A549 (cell line): ENCODE measurements at regions of chr12 and their contacts with region 1.

Region 1: DNA sequence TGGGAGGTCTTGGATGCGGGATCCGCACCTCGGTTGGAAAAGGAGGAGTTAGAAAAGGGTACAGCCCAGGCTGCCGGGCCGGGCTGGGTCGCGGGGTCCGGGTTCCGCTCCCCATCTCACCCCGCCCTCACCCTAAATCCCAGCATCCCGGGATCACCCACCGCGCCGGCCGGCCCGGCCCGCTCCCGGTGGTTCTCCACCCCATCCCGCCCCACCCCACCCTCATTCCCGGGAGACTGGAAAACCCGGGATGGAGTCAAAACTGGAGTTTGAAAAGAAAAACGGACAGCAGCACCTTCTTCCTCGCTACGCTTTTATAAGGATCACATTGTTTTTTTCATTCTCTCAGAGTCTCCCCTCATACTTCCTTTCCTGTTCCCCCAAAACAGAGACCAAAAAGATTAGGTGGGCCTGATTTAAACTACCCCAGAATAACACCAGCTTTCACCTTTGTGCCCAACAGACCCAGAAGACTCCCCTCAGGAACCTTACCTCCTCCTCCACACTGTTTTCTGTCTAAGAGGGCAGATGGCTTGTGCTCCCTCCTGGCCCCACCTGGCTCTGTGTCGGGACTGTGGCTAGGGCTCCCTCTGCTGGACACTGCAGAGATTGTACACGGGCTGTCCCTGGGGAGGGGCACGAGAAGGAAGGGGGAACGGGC is 2.8 kb downstream of the GLI1 start:
- DNase-seq: peak; percentile 96 to 98
- ATAC-seq: peak; percentile 54 to 77
- H3K4me3 ChIP-seq: peak overlapping the region; percentile 65
- H3K27ac ChIP-seq: peak overlapping the region; percentile 92 to 99
- H3K4me1 ChIP-seq: peaks cover 20% of the 10 kb centered on the region
- CTCF ChIP-seq: peak; percentile 96
- EP300 ChIP-seq: peak in 1 of 2 experiments; percentile 21; a peak in 2 of 5 replicates
- POLR2A ChIP-seq: no peak; the same call in 1 of the 2 replicates
- RAD21 ChIP-seq: peak; percentile 84 to 91

Region 2: DNA sequence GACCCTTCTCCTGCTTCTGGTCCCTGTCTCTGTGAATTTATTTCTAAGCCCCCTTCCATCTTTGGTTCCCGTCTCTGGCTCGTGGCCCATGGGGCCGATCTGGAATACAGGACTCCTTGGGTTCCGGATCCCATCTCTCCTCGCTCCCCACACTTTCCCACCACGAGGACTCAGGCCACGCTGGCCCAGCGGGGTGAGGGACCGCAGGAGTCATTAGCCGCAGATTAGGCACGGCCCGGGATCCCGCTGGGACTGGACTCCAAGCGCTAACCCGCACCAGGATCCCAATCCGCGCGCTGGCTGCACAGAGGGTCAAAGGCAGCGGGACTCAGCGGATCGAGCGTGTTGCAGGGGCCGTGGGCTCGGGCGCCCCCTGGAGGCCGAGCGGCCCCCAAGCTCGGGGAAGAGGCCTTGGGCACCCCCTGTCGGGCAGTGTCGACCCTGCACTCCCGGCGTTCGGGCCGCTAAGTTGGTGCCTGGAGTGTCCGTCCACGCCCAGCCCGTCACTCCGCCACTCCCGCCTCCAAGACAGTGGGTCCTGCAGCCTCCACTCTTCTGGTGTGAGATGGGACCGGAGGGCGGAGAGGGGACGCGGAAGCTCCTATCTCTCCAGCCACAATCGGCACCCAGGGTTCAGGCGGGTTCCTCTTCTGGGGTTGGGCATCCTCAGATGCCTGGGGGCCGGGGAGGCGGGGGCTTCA is 223.4 kb before region 1 on chr12:
- CTCF ChIA-PET with region 1: interaction called, 23 read pairs
- POLR2A ChIA-PET with region 1: no interaction called
- DNase-seq: peak; percentile 88 to 92
- ATAC-seq: peak; percentile 49 to 73
- H3K4me3 ChIP-seq: peak overlapping the region; percentile 55
- H3K27ac ChIP-seq: peak overlapping the region; percentile 75 to 93
- H3K4me1 ChIP-seq: peaks cover 26% of the 10 kb centered on the region; the same call in 2 of the 3 replicates
- CTCF ChIP-seq: peak; percentile 100
- EP300 ChIP-seq: no peak
- POLR2A ChIP-seq: no peak
- RAD21 ChIP-seq: peak; percentile 79 to 88

Region 3: DNA sequence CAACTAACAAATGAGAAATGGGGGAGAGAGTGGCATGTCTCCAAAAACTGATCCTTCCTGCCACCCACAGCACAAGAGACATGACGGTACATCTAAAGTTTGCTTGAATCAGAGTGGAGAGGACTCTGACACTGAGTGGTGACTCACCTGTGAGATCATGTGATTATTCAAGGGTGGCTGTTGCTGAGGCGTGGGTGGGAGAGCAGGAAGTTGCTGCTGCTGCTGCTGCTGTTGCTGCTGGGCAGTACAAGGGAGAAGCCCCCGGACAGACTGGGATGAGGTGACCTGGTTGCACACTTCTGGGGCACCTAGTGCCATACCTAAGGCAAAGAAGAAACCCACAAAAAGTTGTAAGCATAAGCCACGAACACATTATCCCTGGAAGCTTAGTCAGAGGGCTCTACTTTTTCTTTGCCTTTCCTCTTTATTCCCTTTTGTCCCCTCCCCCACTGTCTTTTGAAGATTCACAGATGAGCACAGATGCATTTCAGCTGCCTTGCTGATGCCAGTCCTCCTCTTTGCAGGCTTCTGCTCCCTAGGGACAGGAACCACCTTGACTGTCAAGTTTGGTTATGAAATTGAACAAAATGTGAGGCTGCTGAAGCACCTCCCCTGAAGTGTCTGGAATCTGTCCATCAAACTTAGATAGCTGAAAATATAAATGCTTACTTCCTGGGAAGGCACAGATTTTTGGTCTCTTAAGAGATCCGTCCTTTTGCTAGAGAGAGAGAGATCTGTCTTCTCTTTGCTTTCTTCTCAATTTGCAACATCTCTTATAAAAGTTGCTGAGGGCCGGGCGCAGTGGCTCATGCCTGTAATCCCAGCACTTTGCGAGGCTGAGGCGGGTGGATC is 181.9 kb before region 1 on chr12:
- CTCF ChIA-PET with region 1: interaction called, 11 read pairs
- POLR2A ChIA-PET with region 1: no interaction called
- DNase-seq: peak; percentile 78 to 89
- ATAC-seq: peak; percentile 95 to 98
- H3K4me3 ChIP-seq: no peak overlapping the region
- H3K27ac ChIP-seq: peak overlapping the region; percentile 73 to 90
- H3K4me1 ChIP-seq: peaks cover 32% of the 10 kb centered on the region
- CTCF ChIP-seq: no peak
- EP300 ChIP-seq: peak in 1 of 2 experiments; percentile 45; a peak in 2 of 5 replicates
- POLR2A ChIP-seq: peak; percentile 34
- RAD21 ChIP-seq: no peak

Region 4: DNA sequence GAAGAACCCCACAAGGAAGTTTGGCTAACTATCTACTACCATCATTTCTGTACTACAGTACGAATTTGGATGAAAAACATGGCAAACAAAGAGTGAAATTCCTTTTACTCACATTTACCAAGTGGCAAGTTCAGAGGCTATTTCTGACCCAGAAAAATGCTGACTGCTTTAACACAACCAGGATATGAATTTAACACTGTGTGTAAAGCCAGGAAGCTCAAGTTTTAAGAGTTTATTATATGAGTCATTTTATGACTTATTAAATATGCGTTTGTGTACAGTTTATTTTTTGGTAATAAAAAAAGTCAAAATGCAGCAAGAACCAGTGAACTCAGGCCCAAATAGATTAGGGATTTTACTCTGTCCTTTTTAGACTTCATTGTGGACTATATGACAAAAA is 153.0 kb before region 1 on chr12:
- CTCF ChIA-PET with region 1: interaction called, 22 read pairs
- POLR2A ChIA-PET with region 1: no interaction called
- DNase-seq: peak in 1 of 2 experiments; percentile 43
- ATAC-seq: peak; percentile 26 to 61; a peak in 4 of 6 replicates
- H3K4me3 ChIP-seq: no peak overlapping the region
- H3K27ac ChIP-seq: peak overlapping the region; percentile 58 to 76
- H3K4me1 ChIP-seq: peaks cover 30% of the 10 kb centered on the region
- CTCF ChIP-seq: no peak
- EP300 ChIP-seq: no peak
- POLR2A ChIP-seq: no peak
- RAD21 ChIP-seq: no peak

Region 5: DNA sequence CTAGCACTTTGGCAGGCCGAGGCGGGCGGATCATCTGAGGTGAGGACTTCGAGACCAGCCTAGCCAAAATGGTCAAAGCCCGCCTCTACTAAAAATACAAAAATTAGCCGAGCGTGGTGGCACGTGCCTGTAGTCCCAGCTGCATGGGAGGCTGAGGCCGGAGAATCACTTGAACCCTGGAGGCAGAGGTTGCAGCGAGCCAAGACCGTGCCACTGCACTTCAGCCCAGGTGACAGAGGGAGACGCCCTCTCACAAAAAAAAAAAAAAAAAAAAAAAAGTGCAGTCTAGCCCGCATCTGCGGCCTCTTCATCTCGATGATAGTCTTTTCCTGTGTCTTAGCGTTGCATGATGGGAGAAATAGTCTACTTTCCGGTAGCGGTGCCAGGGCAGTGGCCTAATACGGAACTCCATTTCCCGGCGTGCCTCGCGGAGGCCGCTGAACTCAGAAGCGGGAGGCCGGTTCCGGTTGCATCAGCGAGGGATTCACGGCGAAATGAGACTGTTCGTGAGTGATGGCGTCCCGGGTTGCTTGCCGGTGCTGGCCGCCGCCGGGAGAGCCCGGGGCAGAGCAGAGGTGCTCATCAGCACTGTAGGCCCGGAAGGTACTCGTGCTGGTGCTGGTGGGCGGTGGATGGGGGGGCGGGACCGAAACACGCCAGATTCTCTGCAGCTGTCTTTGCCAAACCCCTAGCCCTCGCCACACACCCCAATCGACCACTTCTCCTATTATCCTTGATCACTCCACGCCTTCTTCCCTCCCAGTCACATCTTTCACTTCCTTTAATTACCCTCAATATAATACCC is 25.4 kb after region 1 on chr12 and contains the start of gene MARS1:
- CTCF ChIA-PET with region 1: interaction called, 240 read pairs
- POLR2A ChIA-PET with region 1: no interaction called
- DNase-seq: peak; percentile 94 to 98
- ATAC-seq: peak; percentile 98
- H3K4me3 ChIP-seq: peak within 1 kb of the TSS; percentile 79
- H3K27ac ChIP-seq: peak within 1 kb of the TSS; percentile 94 to 99
- H3K4me1 ChIP-seq: peaks cover 12% of the 10 kb centered on the region
- CTCF ChIP-seq: peak; percentile 45
- EP300 ChIP-seq: no peak
- POLR2A ChIP-seq: peak; percentile 76
- RAD21 ChIP-seq: no peak; a peak in 1 of 5 replicates
- polyA plus RNA-seq, gene MARS1: 372 and 406 TPM in 2 replicates

Region 6: DNA sequence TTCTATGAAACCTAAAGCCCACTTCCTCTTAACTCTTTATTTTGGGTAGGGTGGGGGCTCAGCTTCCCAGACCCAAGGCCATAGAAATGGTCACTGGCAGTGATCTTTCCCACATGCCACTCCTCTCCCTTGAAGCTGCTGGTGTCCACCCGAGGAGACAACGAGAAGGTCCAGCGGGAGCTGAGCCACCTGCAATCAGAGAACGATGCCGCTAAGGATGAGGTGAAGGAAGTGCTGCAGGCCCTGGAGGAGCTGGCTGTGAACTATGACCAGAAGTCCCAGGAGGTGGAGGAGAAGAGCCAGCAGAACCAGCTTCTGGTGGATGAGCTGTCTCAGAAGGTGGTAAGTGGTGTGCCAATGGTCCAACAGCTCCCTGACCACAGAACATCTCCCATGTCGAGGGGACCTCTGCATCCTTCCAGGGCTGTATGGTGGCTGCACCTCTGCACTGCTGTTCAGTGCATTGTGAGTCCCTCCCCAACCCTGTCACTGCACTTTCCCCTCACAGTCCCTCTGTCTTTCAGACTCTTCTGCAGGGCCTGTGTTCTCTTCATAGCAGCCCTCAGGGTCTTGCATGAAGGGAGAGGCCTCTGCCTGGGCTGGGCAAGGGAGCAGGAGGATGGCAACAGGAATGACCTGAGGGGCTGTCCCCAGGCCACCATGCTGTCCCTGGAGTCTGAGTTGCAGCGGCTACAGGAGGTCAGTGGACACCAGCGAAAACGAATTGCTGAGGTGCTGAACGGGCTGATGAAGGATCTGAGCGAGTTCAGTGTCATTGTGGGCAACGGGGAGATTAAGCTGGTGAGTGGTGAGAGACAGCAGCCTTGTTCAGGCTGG is 109.8 kb after region 1 on chr12:
- CTCF ChIA-PET with region 1: no interaction called
- POLR2A ChIA-PET with region 1: no interaction called
- DNase-seq: no peak
- ATAC-seq: peak; percentile 17 to 28; a peak in 2 of 6 replicates
- H3K4me3 ChIP-seq: no peak overlapping the region
- H3K27ac ChIP-seq: no peak overlapping the region
- H3K4me1 ChIP-seq: no peaks in the 10 kb centered on the region
- CTCF ChIP-seq: no peak
- EP300 ChIP-seq: no peak
- POLR2A ChIP-seq: no peak
- RAD21 ChIP-seq: no peak

Region 7: DNA sequence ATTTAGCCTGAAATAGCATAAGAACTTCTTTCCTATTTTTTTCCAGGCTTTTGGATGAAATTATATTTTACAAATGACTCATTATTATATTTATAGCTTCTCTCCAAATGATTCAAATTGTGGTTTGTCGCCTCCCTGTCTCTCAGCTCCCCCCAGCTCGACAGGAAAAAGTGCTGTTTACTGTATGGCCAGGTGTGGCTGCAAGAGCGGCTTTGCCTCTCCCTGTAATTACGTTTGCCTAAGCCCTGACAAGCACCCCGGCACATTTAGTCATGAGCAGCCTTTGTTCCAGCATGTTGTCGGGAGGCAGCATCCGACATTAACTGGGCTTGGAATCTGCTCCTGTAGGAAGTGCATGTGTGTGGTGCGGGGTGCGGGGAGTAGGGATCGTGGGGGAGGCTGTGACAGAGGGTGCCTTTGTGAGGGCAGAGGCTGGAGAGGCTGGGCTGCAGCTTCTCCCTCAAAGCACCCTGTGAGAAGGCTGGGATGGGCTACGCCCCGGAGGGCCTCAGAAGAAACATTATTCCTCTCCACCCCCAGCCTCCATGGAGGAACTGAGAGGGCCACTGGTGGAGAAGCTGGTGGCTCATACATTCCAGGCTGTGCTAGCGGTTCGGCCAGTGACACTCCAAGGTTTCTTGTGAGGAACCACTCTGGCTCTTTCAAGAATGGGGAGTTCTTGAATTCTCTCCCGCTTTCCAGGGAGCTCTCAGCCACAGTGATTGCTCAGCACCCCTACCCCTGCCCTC is 426.2 kb after region 1 on chr12:
- CTCF ChIA-PET with region 1: no interaction called
- POLR2A ChIA-PET with region 1: no interaction called
- DNase-seq: no peak
- ATAC-seq: peak; percentile 27 to 48; a peak in 3 of 6 replicates
- H3K4me3 ChIP-seq: no peak overlapping the region
- H3K27ac ChIP-seq: peak overlapping the region; percentile 60 to 84
- H3K4me1 ChIP-seq: peaks cover 53% of the 10 kb centered on the region
- CTCF ChIP-seq: no peak
- EP300 ChIP-seq: no peak
- POLR2A ChIP-seq: no peak
- RAD21 ChIP-seq: no peak